CD4-positive, alpha-beta memory T cell (primary cell): ENCODE measurements at regions of chr1 and their contacts with region 1.

Region 1: GRCh38 chr1:159798893-159799292 is 3.3 kb upstream of the FCRL6 start:
- DNase-seq: peak in 4 of 5 donors; percentile 35 to 48 (median 42)
- H3K4me3 ChIP-seq: no peak overlapping the region
- H3K4me3 Mint-ChIP-seq: peak overlapping the region in 1 of 8 donors; percentile 18
- H3K27ac ChIP-seq: no peak overlapping the region
- H3K27ac Mint-ChIP-seq: peak overlapping the region in 1 of 7 donors; percentile 36
- H3K4me1 ChIP-seq: peaks cover 23% of the 10 kb centered on the region
- H3K4me1 Mint-ChIP-seq: peaks cover 22 to 39% (median 28%) of the 10 kb centered on the region in 4 donors
- H3K27me3 ChIP-seq: no peaks in the 10 kb centered on the region
- H3K27me3 Mint-ChIP-seq: peaks cover 2 to 6% of the 10 kb centered on the region in 2 donors

Region 2: GRCh38 chr1:159161001-159161718 is 637.7 kb before region 1 on chr1:
- CTCF ChIA-PET with region 1: no interaction called
- POLR2A ChIA-PET with region 1: no interaction called
- intact Hi-C with region 1: loop called (anchors 10 kb)
- DNase-seq: peak; percentile 32 to 49 (median 46)
- H3K4me3 ChIP-seq: no peak overlapping the region
- H3K4me3 Mint-ChIP-seq: no peak overlapping the region
- H3K27ac ChIP-seq: no peak overlapping the region
- H3K27ac Mint-ChIP-seq: no peak overlapping the region
- H3K4me1 ChIP-seq: no peaks in the 10 kb centered on the region
- H3K4me1 Mint-ChIP-seq: peaks cover 0 to 5% (median 2%) of the 10 kb centered on the region in 4 donors
- H3K27me3 ChIP-seq: peaks cover 5% of the 10 kb centered on the region
- H3K27me3 Mint-ChIP-seq: peaks cover 28 to 30% of the 10 kb centered on the region in 2 donors

Region 3: GRCh38 chr1:159780583-159781582 is 18.0 kb before region 1 on chr1 and contains the start of gene DUSP23:
- CTCF ChIA-PET with region 1: interaction called, 42 read pairs
- POLR2A ChIA-PET with region 1: interaction called, 7 read pairs
- intact Hi-C with region 1: loop called (anchors 1 kb)
- DNase-seq: peak; percentile 96 to 97 (median 97)
- H3K4me3 ChIP-seq: peak within 1 kb of the TSS; percentile 39 to 57
- H3K4me3 Mint-ChIP-seq: peak within 1 kb of the TSS; percentile 83 to 93 (median 87)
- H3K27ac ChIP-seq: peak within 1 kb of the TSS; percentile 61
- H3K27ac Mint-ChIP-seq: peak within 1 kb of the TSS; percentile 81 to 96 (median 92)
- H3K4me1 ChIP-seq: peaks cover 16% of the 10 kb centered on the region
- H3K4me1 Mint-ChIP-seq: peaks cover 14 to 55% (median 36%) of the 10 kb centered on the region in 4 donors
- H3K27me3 ChIP-seq: no peaks in the 10 kb centered on the region
- H3K27me3 Mint-ChIP-seq: no peaks in the 10 kb centered on the region
- total RNA-seq, gene DUSP23: 14.5 to 15.7 TPM

Region 4: DNA sequence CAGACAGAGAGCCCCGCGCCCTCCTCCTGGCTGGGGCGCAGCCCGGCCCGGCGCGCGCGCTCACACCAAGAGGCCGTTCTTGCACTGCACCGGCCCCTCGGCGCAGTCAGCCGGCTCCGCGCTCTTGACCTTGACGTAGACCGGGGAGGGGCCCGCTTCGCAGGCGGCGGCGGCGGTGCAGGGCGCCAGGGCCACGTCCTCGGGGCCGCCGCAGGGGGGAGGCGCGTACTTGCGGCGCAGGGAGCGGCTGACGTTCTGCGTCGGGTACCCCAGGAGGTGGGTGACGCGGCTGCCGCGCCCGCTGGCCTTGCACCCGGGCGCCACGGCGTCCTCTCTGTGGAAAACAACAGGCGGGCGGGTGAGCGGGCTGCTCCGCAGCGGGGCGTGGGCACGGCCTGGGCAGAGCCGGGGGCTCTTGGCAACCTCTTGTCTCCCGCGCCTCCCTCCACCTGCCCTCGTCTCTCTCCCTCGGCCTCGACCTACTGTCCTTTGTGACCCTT is 55.9 kb after region 1 on chr1:
- CTCF ChIA-PET with region 1: interaction called, 29 read pairs
- POLR2A ChIA-PET with region 1: no interaction called
- intact Hi-C with region 1: no loop called
- DNase-seq: peak; percentile 66 to 75 (median 70)
- H3K4me3 ChIP-seq: peak overlapping the region; percentile 42 to 53
- H3K4me3 Mint-ChIP-seq: peak overlapping the region; percentile 83 to 95 (median 89)
- H3K27ac ChIP-seq: peak overlapping the region; percentile 38
- H3K27ac Mint-ChIP-seq: peak overlapping the region; percentile 33 to 93 (median 84)
- H3K4me1 ChIP-seq: peaks cover 14% of the 10 kb centered on the region
- H3K4me1 Mint-ChIP-seq: peaks cover 9 to 25% (median 14%) of the 10 kb centered on the region in 4 donors
- H3K27me3 ChIP-seq: no peaks in the 10 kb centered on the region
- H3K27me3 Mint-ChIP-seq: no peaks in the 10 kb centered on the region

Region 5: GRCh38 chr1:159881930-159882839 is 83.3 kb after region 1 on chr1:
- CTCF ChIA-PET with region 1: interaction called, 571 read pairs
- POLR2A ChIA-PET with region 1: no interaction called
- intact Hi-C with region 1: no loop called
- DNase-seq: peak; percentile 35 to 60 (median 38)
- H3K4me3 ChIP-seq: no peak overlapping the region
- H3K4me3 Mint-ChIP-seq: no peak overlapping the region
- H3K27ac ChIP-seq: no peak overlapping the region
- H3K27ac Mint-ChIP-seq: no peak overlapping the region
- H3K4me1 ChIP-seq: peaks cover 16% of the 10 kb centered on the region
- H3K4me1 Mint-ChIP-seq: no peaks in the 10 kb centered on the region
- H3K27me3 ChIP-seq: no peaks in the 10 kb centered on the region
- H3K27me3 Mint-ChIP-seq: no peaks in the 10 kb centered on the region

Region 6: GRCh38 chr1:159936273-159936904 is 137.5 kb after region 1 on chr1:
- CTCF ChIA-PET with region 1: interaction called, 4 read pairs
- POLR2A ChIA-PET with region 1: no interaction called
- intact Hi-C with region 1: loop called (anchors 2 kb)
- DNase-seq: peak; percentile 69 to 81 (median 73)
- H3K4me3 ChIP-seq: no peak overlapping the region
- H3K4me3 Mint-ChIP-seq: peak overlapping the region in 1 of 8 donors; percentile 26
- H3K27ac ChIP-seq: no peak overlapping the region
- H3K27ac Mint-ChIP-seq: peak overlapping the region in 3 of 7 donors; percentile 40 to 68 (median 45)
- H3K4me1 ChIP-seq: peaks cover 15% of the 10 kb centered on the region
- H3K4me1 Mint-ChIP-seq: peaks cover 0 to 7% (median 3%) of the 10 kb centered on the region in 4 donors
- H3K27me3 ChIP-seq: no peaks in the 10 kb centered on the region
- H3K27me3 Mint-ChIP-seq: peaks cover 6 to 10% of the 10 kb centered on the region in 2 donors

Region 7: DNA sequence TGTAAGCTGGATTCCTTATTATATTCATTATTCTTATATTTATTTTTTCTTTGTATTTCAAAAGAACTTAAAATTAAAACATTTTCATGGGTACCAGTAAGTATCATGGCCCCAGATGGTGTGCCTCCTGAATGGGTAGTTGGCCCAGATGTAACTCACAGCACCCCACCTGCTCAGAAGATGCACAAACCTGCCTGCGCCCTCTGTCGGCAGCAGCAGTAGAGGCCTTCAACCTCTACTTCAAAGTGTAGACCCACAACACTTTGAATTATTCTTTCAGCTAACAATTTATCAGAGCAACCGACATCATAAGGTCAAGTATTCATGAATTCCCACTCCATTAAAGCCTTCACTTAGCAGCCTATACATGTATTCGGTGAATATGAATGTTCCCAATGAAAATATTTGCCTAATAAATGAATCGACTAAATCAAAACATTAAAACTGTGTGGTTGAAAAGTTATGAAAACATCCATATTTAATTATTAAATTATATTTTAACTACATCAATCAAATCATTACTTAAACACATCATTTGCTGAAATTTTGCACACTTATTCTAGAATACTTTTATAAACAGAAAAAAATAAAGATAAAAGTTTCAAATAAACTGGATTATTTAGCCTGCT is 207.5 kb after region 1 on chr1:
- CTCF ChIA-PET with region 1: interaction called, 77 read pairs
- POLR2A ChIA-PET with region 1: no interaction called
- intact Hi-C with region 1: loop called (anchors 1 kb)
- DNase-seq: peak; percentile 59 to 69 (median 62)
- H3K4me3 ChIP-seq: no peak overlapping the region
- H3K4me3 Mint-ChIP-seq: no peak overlapping the region
- H3K27ac ChIP-seq: no peak overlapping the region
- H3K27ac Mint-ChIP-seq: peak overlapping the region in 1 of 7 donors; percentile 13
- H3K4me1 ChIP-seq: no peaks in the 10 kb centered on the region
- H3K4me1 Mint-ChIP-seq: no peaks in the 10 kb centered on the region
- H3K27me3 ChIP-seq: no peaks in the 10 kb centered on the region
- H3K27me3 Mint-ChIP-seq: peaks cover 1 to 5% of the 10 kb centered on the region in 2 donors